Colonic mucosa (tissue), 4 donors: ENCODE measurements at regions of chr6 and their contacts with region 1.

Region 1: GRCh38 chr6:169285165-169285564 is 31.5 kb upstream of the THBS2 start:
- DNase-seq: no peak
- H3K4me3 ChIP-seq: no peak overlapping the region
- H3K27ac ChIP-seq: no peak overlapping the region
- H3K4me1 ChIP-seq: no peaks in the 10 kb centered on the region
- H3K27me3 ChIP-seq: no peaks in the 10 kb centered on the region
- CTCF ChIP-seq: no peak

Region 2: GRCh38 chr6:169310983-169311382 is 25.8 kb after region 1 on chr6:
- intact Hi-C with region 1: loop called (anchors 1 kb)
- DNase-seq: no peak
- H3K4me3 ChIP-seq: no peak overlapping the region
- H3K27ac ChIP-seq: no peak overlapping the region
- H3K4me1 ChIP-seq: no peaks in the 10 kb centered on the region
- H3K27me3 ChIP-seq: no peaks in the 10 kb centered on the region
- CTCF ChIP-seq: no peak

Region 3: DNA sequence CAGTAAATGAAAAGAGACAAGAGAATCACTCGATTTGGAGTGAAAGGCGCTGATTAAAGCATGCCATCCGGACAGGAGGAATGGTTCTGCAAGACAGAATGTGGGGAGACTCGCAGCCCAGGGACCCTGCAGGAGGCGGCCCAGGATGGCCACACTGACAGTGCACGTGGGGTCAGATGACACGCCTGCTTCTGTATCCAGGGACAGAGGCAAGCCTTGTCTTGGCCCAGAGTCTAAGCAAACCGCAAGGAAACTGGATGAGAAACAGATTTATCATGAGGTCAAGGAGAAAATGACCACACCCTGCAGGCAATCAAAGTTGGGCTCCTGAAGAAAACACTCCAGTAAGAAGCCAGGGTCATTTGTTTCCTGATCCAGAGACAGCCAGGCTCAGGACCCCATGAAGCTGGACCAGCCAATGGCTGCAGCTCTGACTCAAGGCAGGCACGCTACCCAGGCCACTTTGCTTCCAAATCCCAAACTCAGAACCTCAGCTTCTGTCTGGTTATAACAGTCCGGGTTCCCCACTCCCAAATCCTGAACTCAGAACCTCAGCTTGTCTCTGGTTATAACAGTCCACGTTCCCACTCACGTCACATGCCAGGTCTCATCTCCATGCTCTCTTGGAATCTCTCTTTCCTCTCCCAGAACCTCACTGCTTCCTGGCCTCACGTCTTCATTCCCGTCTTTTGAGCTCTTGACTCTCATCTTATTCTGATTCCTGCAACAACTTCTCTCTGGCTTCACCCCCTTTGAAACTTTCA is 113.4 kb after region 1 on chr6:
- intact Hi-C with region 1: no loop called
- DNase-seq: no peak
- H3K4me3 ChIP-seq: no peak overlapping the region
- H3K27ac ChIP-seq: no peak overlapping the region
- H3K4me1 ChIP-seq: no peaks in the 10 kb centered on the region
- H3K27me3 ChIP-seq: no peaks in the 10 kb centered on the region
- CTCF ChIP-seq: no peak